Ovary (tissue), 10 donors: ENCODE measurements at regions of chr1 and their contacts with region 1.

Region 1: DNA sequence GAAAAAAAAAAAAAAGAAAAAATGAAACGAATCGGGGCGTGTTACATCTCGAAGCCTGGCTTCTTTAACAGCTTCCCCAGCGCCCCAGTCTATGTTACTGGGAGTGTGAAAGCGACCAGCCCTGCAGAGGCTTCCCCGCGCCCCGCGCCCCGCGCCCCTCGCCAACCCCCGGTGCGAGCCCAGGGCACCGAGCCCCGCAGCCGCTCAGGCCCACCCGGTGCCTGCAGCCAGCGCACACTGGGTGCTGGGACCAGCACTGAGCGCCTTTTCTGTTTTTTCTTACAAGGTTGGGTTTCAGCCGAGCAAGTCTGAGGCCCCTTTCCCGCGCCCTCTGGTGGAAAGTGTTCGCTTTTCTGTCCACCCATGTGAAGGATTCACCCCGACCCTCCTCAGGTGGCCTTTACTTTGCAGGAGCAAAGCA is 42.1 kb upstream of the ZNF496 start:
- DNase-seq: peak; percentile 24 to 64 (median 58)
- H3K4me3 ChIP-seq: peak overlapping the region; percentile 36
- H3K27ac ChIP-seq: no peak overlapping the region
- H3K4me1 ChIP-seq: no peaks in the 10 kb centered on the region
- H3K27me3 ChIP-seq: no peaks in the 10 kb centered on the region
- CTCF ChIP-seq: peak in 2 of 3 donors; percentile 22 to 26
- EP300 ChIP-seq: no peak
- POLR2A ChIP-seq: no peak

Region 2: GRCh38 chr1:247331172-247331991 is 42.3 kb before region 1 on chr1 and contains the start of gene ZNF496:
- intact Hi-C with region 1: loop called in 1 of 4 experiments (anchors 5 kb)
- DNase-seq: peak; percentile 89 to 92 (median 90)
- H3K4me3 ChIP-seq: peak within 1 kb of the TSS; percentile 82
- H3K27ac ChIP-seq: peak within 1 kb of the TSS; percentile 80 to 97
- H3K4me1 ChIP-seq: peaks cover 9% of the 10 kb centered on the region
- H3K27me3 ChIP-seq: no peaks in the 10 kb centered on the region
- CTCF ChIP-seq: no peak
- EP300 ChIP-seq: no peak
- POLR2A ChIP-seq: peak; percentile 40
- total RNA-seq, gene ZNF496: 31.8 to 53.8 (median 42.4) TPM

Region 3: GRCh38 chr1:247401310-247402119 is 27.8 kb after region 1 on chr1:
- intact Hi-C with region 1: no loop called
- DNase-seq: no peak
- H3K4me3 ChIP-seq: no peak overlapping the region
- H3K27ac ChIP-seq: no peak overlapping the region
- H3K4me1 ChIP-seq: no peaks in the 10 kb centered on the region
- H3K27me3 ChIP-seq: no peaks in the 10 kb centered on the region
- CTCF ChIP-seq: no peak
- EP300 ChIP-seq: no peak
- POLR2A ChIP-seq: no peak